Prostate gland (tissue), 2 donors: ENCODE measurements at regions of chr11 and their contacts with region 1.

Region 1: GRCh38 chr11:20647976-20648565 is 21.3 kb upstream of the NELL1 start:
- DNase-seq: peak; percentile 29
- H3K4me3 ChIP-seq: no peak overlapping the region
- H3K27ac ChIP-seq: no peak overlapping the region
- H3K4me1 ChIP-seq: no peaks in the 10 kb centered on the region
- H3K27me3 ChIP-seq: no peaks in the 10 kb centered on the region
- CTCF ChIP-seq: peak; percentile 70 to 91 (median 84)
- POLR2A ChIP-seq: no peak

Region 2: DNA sequence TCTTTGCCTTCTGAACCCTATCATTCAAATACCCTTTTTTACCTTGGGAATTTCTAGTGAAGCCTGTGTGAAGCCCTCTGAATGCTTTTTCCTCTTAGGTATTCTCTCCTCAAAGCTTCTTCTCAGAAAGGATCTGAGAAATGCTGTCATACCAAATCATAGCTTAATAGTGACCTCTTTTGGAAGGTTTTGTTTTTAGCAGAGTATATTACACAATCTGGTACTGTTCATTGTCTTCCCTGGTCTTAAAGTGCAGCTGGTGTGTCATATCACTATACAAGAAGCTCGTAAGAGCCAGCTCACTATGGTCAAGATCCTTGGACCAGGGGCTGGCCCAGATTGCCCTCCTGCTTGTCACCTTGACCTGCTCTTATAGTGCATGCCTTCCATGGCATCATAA is 1340.4 kb after region 1 on chr11:
- intact Hi-C with region 1: loop called (anchors 2 kb)
- DNase-seq: no peak
- H3K4me3 ChIP-seq: no peak overlapping the region
- H3K27ac ChIP-seq: no peak overlapping the region
- H3K4me1 ChIP-seq: no peaks in the 10 kb centered on the region
- H3K27me3 ChIP-seq: no peaks in the 10 kb centered on the region
- CTCF ChIP-seq: no peak
- POLR2A ChIP-seq: no peak

Region 3: DNA sequence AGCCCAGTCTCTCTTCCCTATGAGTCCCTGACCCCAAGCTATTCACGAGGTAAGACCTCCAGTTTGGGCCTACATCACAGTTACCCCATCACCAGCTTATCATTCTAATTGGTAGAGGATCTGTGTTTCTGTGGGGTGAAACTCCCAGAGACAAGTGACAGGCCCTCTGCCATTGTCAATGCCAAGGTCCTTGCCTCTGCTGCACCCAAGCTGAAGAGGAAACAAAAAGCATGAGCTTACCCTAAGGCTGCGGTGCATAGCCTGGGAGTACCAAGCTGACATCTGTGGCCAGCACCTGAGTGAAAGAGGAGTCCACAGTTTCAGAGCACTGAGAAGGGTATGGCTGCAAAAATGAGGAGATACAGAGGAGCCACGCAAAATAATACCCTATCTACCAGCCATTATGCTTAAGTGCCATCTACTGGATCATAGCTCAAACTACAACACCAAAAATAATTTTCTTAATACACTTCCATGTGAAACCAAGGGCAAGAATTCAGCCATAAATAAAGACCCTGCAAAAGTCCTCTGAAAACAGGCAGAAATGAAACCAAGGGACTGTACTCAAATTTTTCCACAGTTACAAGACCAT is 1482.5 kb after region 1 on chr11:
- intact Hi-C with region 1: loop called (anchors 2 kb)
- DNase-seq: no peak
- H3K4me3 ChIP-seq: no peak overlapping the region
- H3K27ac ChIP-seq: no peak overlapping the region
- H3K4me1 ChIP-seq: no peaks in the 10 kb centered on the region
- H3K27me3 ChIP-seq: no peaks in the 10 kb centered on the region
- CTCF ChIP-seq: peak in 2 of 4 experiments; percentile 27 to 31
- POLR2A ChIP-seq: no peak

Region 4: GRCh38 chr11:22304337-22304961 is 1656.4 kb after region 1 on chr11:
- intact Hi-C with region 1: loop called (anchors 10 kb)
- DNase-seq: no peak
- H3K4me3 ChIP-seq: no peak overlapping the region
- H3K27ac ChIP-seq: no peak overlapping the region
- H3K4me1 ChIP-seq: no peaks in the 10 kb centered on the region
- H3K27me3 ChIP-seq: no peaks in the 10 kb centered on the region
- CTCF ChIP-seq: peak; percentile 27 to 82 (median 70)
- POLR2A ChIP-seq: no peak